ENCODE measurements at regions of chr18 and their contacts with region 1.

Region 1: DNA sequence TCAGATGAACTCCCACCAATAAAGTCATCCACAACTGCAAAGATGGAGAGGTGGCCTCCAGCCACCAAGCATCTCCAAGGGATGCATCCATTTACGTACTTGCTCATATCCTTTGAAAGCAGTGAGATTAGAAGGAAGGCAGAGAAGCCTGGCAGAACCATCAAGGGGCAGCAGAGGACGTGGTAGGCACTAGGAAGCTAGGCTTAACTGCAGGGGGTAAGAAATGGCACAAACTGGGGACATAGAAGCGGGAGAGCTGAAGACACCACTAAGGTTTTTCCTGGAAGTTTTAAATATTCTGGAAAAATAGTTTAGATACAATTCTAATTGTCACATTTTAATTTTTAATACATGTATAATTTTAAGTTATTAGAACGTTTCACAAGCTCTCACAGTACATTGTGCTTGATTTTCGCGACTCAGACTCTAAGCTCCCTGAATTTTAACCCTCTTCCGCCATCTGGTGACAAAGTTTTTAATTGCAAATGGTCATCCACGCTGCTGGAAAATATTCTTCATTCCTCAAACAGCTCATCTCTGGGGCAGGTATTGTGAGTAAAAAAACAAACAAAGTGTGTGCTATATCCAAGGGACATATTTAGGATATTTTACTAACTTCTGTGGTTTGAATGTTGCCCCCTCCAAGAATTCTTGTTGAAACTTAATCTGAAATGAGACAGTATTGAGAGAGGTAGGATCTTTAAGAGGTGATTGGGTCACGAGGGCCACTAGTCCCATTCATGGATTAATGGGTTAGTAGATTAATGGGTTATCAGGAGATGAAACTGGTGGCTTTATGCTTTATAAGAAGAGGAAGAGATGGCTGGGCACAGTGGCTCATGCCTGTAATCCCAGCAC is 1.6 kb upstream of the PSTPIP2 start:
- DNase-seq: peak in 2 of 4 donors; percentile 50 to 65
- ATAC-seq: peak; percentile 61
- H3K4me3 ChIP-seq: no peak overlapping the region
- H3K27ac ChIP-seq: peak overlapping the region in 1 of 2 donors; percentile 13
- H3K4me1 ChIP-seq: peaks cover 10 to 45% of the 10 kb centered on the region in 2 donors
- H3K27me3 ChIP-seq: no peaks in the 10 kb centered on the region
- CTCF ChIP-seq: peak; percentile 44 to 70

Region 2: GRCh38 chr18:45664824-45665763 is 408.6 kb before region 1 on chr18:
- intact Hi-C with region 1: loop called in 1 of 2 experiments (anchors 10 kb)
- DNase-seq: peak in 2 of 4 donors; percentile 53 to 71
- ATAC-seq: peak; percentile 89
- H3K4me3 ChIP-seq: no peak overlapping the region
- H3K27ac ChIP-seq: peak overlapping the region in 1 of 2 donors; percentile 50
- H3K4me1 ChIP-seq: peaks cover 4 to 24% of the 10 kb centered on the region in 2 donors
- H3K27me3 ChIP-seq: no peaks in the 10 kb centered on the region
- CTCF ChIP-seq: peak; percentile 94 to 97

Region 3: GRCh38 chr18:45951016-45951714 is 122.5 kb before region 1 on chr18:
- intact Hi-C with region 1: loop called in 1 of 2 experiments (anchors 10 kb)
- DNase-seq: peak in 1 of 4 donors; percentile 77
- ATAC-seq: peak; percentile 86
- H3K4me3 ChIP-seq: no peak overlapping the region
- H3K27ac ChIP-seq: peak overlapping the region in 1 of 2 donors; percentile 15
- H3K4me1 ChIP-seq: peaks cover 0 to 14% of the 10 kb centered on the region in 2 donors
- H3K27me3 ChIP-seq: no peaks in the 10 kb centered on the region
- CTCF ChIP-seq: no peak

Measured in left lung (tissue), 14 donors.